ENCODE measurements at regions of chr2 and their contacts with region 1.

Region 1: DNA sequence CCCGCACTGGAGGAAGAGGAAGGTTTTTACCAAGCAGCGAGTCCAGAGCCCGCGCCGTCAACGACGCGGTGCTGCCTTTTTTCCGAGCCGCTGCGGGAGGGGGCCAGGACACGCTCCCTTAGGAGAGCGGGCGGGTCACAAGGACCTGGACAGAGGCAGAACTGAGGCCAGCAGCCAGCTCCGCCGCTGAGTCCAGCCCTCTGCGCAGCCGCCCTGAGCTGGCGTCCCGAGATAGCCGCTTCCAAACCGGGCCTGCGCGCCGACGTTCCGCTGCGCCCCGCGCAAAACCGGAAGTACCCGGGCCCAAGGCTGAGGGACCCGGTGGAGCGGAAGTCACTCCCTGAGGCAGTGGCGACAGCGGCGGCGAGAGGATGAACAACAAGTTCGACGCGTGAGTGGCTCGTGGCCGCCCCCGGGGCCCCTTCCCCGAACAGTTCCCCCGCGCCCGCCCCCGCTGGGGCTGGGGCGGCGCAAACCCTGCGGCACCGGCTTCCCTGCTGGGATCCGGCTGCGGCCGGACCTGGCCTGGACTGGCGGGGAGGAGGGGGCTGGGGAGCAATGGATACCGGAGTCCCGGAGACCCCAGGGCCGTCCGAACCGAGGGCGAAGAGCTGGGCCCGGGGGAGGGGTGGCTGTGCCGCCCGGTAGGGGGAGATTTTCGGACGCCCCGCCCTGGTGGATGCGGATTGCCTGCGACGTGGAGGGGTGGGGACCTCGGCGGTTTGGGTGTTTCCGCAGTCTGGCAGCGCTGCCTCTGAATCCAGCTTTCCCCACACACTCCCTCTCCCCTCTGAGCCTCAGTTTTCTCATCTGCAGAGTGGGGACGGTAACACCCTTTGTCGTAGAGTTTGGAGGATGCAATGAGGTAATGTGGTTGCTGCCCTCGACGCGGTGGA is at the starts of genes EIF4E2 and TIGD1:
- DNase-seq: peak; percentile 91
- ATAC-seq: peak; percentile 97
- H3K4me3 ChIP-seq: peak within 1 kb of the TSS; percentile 89
- H3K27ac ChIP-seq: peak within 1 kb of the TSS; percentile 90
- H3K4me1 ChIP-seq: peaks cover 7% of the 10 kb centered on the region
- H3K27me3 ChIP-seq: no peaks in the 10 kb centered on the region
- CTCF ChIP-seq: no peak
- total RNA-seq, gene EIF4E2: 53.9 and 55.1 TPM in 2 replicates
- total RNA-seq, gene TIGD1: 5.9 and 6.3 TPM in 2 replicates

Region 2: DNA sequence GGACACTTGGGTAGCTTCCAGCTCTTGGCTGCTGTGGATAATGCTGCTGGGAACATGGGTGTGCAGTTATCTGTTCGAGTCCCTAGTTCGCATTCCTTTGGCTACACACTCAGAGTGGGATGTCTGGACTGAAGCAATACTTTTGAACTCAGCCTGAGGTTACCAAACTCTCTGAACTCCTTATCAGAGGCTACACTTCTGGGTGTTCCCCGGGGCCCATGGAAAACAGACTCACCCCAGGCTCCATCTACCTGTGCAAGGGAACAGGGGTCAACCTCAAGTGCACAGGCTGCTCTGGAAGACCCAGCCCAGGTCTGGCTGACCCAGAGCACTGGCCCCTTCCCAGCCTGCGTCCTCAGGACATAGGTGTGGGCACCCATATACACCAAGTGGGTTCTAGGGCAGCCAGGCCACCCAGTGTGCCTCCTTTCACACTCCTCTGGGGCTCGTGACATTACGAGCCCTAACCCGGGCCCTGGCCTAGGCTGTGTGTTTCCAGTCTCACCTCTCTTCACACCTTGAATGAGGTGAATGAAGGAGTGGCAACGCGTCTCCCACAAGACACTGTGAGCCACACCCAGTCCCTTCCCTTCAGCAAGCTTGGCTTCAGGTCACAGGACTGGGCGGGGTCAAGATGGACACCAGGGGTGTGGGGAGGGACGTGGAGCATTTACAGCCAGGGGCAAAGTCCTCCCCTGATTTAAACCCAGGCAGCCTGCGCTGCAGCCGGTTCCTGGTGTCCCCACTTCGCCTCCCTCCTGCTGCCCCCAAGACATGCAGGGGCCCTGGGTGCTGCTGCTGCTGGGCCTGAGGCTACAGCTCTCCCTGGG is 95.0 kb before region 1 on chr2 and contains the start of gene ALPI:
- CTCF ChIA-PET with region 1: no interaction called
- POLR2A ChIA-PET with region 1: interaction called, 11 read pairs
- intact Hi-C with region 1: no loop called
- DNase-seq: no peak
- ATAC-seq: no peak
- H3K4me3 ChIP-seq: no peak within 1 kb of the TSS
- H3K27ac ChIP-seq: no peak within 1 kb of the TSS
- H3K4me1 ChIP-seq: no peaks in the 10 kb centered on the region
- H3K27me3 ChIP-seq: 0 out of 2 replicates have a peak, but pooled peaks cover 4% of the 10 kb centered on the region
- CTCF ChIP-seq: no peak
- total RNA-seq, gene ALPI: not detected in 2 replicates

Region 3: DNA sequence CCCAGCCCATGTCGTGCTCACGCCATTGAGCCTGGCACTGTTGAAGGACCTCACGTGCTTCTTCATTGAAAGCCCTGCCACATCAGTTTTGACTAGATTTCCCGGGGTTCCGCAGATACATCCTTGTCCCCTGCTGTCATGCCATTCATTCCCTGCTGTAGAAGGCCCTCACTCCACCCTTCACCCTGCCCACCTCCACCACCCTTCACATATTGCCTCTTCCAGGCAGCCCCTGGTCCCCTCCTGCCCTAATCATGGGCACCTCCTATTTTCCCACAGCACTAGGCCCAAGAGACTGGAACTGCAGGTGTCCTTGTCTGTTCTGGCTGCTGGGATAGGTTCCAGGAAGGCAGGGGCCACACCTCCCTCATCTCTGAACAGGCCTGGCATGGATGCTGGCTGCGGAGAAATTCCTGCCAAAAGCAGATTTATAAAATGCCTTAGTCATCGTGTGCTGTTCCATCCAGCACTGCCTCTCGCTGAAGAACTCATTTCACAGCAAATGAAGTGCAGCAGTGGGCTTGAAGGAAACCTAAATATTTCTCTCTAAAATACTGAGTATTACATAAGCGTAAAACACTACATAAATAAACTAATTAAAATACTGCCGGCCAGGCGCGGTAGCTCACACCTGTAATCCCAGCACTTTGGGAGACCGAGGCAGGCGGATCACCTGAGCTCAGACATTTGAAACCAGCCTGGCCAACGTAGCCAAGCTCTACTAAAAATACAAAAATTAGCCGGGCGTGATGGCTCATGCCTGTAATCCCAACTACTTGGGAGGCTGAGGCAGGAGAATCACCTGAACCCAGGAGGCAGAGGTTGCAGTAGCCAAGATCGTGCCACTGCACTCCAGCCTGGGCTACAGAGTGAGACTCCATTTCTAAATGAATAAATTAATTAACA is 38.3 kb after region 1 on chr2:
- CTCF ChIA-PET with region 1: no interaction called
- POLR2A ChIA-PET with region 1: interaction called, 5 read pairs
- intact Hi-C with region 1: loop called (anchors 2 kb)
- DNase-seq: peak; percentile 94
- ATAC-seq: peak; percentile 75
- H3K4me3 ChIP-seq: no peak overlapping the region; the same call in 1 of the 2 replicates
- H3K27ac ChIP-seq: peak overlapping the region; percentile 85
- H3K4me1 ChIP-seq: peaks cover 40% of the 10 kb centered on the region
- H3K27me3 ChIP-seq: no peaks in the 10 kb centered on the region
- CTCF ChIP-seq: no peak

Region 4: DNA sequence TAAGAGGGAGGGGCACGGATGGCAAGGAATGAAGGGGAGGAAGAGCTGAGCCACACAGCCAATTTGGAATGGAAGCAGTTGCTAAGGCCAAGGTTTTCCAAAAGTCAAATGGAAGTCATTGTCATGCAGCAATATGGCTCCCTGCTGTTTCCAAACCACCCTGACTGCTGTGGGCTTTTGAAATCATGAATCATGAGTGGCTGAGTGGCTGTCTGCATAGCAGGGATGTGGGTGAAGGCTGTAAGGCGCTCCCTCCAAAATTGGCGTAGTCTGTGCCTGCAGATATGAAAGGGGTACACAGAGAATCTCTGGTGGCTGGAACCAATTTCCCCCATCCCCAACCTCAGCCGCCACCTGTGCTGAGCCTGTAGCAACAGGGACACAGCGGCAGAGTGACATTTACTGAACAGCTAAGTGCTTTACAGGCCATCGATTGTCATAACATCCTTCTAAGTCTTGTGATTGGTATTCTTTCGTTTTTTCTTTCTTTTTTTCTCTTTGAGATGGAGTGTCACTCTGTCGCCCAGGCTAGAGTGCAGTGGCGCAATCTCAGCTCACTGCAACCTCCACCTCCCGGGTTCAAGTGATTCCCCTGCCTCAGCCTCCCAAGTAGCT is 70.5 kb after region 1 on chr2:
- CTCF ChIA-PET with region 1: no interaction called
- POLR2A ChIA-PET with region 1: no interaction called
- intact Hi-C with region 1: no loop called
- DNase-seq: no peak
- ATAC-seq: no peak
- H3K4me3 ChIP-seq: no peak overlapping the region
- H3K27ac ChIP-seq: no peak overlapping the region
- H3K4me1 ChIP-seq: peaks cover 15% of the 10 kb centered on the region
- H3K27me3 ChIP-seq: no peaks in the 10 kb centered on the region
- CTCF ChIP-seq: no peak

Region 5: DNA sequence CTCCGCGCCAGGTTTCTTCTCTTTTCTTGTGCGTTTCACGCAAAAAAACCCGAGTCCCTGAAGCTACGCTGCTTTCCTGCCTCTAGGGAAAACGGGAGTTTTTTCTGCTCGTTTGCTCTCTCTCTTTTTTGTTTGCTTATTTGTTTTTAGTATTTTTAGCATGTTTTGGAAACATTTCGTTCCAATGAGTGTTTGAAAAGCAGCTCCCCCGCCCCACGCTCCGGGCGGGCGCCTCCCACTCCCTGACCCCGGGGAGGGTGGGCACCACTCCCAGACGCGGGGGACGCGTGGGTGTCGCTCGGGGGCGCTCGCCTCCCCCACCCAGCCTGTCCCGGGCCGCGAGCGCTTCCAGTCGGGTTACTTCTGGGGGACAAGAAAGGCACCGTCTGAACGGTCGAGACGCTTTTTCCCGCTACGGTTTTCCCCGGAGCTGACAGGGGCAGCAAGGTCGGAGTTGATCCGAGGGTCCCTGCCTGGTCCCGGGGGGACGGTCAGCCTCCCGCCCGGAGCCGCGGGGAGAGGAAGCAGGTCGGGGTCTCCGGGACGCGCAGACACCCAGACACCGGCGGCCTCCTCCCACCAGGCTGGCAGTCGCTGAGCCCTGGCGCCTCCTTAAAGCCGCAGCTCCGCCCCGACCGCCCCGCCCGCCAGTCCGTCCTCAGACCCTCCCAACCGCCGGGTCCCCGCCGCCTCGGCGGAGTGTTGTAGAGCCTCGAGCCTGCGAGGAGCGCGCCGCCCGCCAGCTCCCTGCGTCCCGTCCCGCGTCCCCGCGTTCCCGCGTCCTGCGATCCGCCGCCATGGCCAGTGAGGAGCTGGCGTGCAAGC is 82.5 kb after region 1 on chr2 and contains the start of gene EFHD1:
- CTCF ChIA-PET with region 1: no interaction called
- POLR2A ChIA-PET with region 1: interaction called, 10 read pairs
- intact Hi-C with region 1: no loop called
- DNase-seq: peak; percentile 32
- ATAC-seq: peak; percentile 78
- H3K4me3 ChIP-seq: peak within 1 kb of the TSS; percentile 70
- H3K27ac ChIP-seq: no peak within 1 kb of the TSS
- H3K4me1 ChIP-seq: peaks cover 4% of the 10 kb centered on the region; the same call in 1 of the 2 replicates
- H3K27me3 ChIP-seq: no peaks in the 10 kb centered on the region
- CTCF ChIP-seq: 0 out of 2 replicates have a peak, but pooled peaks have one; percentile 23
- total RNA-seq, gene EFHD1: 0.07 TPM in 1 of 2 replicates, not detected in the other

Measured in PC-3 (cell line).